ENCODE measurements at regions of chr2 and their contacts with region 1.

Region 1: GRCh38 chr2:223970343-223971128 is 13.3 kb downstream of the MRPL44 start:
- DNase-seq: no peak
- ATAC-seq: peak; percentile 66
- H3K4me3 Mint-ChIP-seq: no peak overlapping the region
- H3K27ac Mint-ChIP-seq: no peak overlapping the region
- H3K4me1 Mint-ChIP-seq: peaks cover 22% of the 10 kb centered on the region
- H3K27me3 Mint-ChIP-seq: no peaks in the 10 kb centered on the region
- CTCF ChIP-seq: peak; percentile 80

Region 2: DNA sequence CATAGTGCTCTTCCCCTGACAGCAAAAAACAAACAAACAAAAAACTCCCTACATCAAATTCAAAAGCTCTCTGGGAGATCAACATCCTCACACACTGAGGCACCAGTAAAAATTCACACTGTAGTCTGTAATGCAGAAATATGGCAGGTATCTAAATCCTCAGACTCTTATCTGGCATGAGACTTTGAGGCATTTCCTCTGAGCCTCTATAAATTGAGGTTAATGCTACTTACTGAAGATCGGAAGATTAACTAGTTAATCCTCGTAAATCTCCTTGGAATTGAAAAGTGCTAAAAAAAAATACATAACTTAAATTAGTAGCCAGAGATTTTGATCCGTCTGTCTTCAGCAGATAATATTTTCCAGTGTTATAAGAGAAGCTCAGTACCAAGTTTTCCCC is 198.2 kb before region 1 on chr2:
- CTCF ChIA-PET with region 1: no interaction called
- POLR2A ChIA-PET with region 1: no interaction called
- DNase-seq: no peak
- ATAC-seq: no peak
- H3K4me3 Mint-ChIP-seq: no peak overlapping the region
- H3K27ac Mint-ChIP-seq: no peak overlapping the region
- H3K4me1 Mint-ChIP-seq: peaks cover 3% of the 10 kb centered on the region; the same call in 1 of the 2 replicates
- H3K27me3 Mint-ChIP-seq: no peaks in the 10 kb centered on the region
- CTCF ChIP-seq: no peak

Region 3: GRCh38 chr2:223993621-223994232 is 23.2 kb after region 1 on chr2:
- CTCF ChIA-PET with region 1: interaction called, 27 read pairs
- POLR2A ChIA-PET with region 1: no interaction called
- DNase-seq: peak; percentile 64
- ATAC-seq: peak; percentile 64
- H3K4me3 Mint-ChIP-seq: no peak overlapping the region
- H3K27ac Mint-ChIP-seq: no peak overlapping the region
- H3K4me1 Mint-ChIP-seq: peaks cover 8% of the 10 kb centered on the region
- H3K27me3 Mint-ChIP-seq: no peaks in the 10 kb centered on the region
- CTCF ChIP-seq: peak; percentile 72

Region 4: GRCh38 chr2:224062481-224063297 is 92.2 kb after region 1 on chr2:
- CTCF ChIA-PET with region 1: interaction called, 20 read pairs
- POLR2A ChIA-PET with region 1: no interaction called
- DNase-seq: no peak
- ATAC-seq: peak; percentile 63
- H3K4me3 Mint-ChIP-seq: no peak overlapping the region
- H3K27ac Mint-ChIP-seq: no peak overlapping the region
- H3K4me1 Mint-ChIP-seq: 0 out of 2 replicates have a peak, but pooled peaks cover 5% of the 10 kb centered on the region
- H3K27me3 Mint-ChIP-seq: no peaks in the 10 kb centered on the region
- CTCF ChIP-seq: no peak

Region 5: DNA sequence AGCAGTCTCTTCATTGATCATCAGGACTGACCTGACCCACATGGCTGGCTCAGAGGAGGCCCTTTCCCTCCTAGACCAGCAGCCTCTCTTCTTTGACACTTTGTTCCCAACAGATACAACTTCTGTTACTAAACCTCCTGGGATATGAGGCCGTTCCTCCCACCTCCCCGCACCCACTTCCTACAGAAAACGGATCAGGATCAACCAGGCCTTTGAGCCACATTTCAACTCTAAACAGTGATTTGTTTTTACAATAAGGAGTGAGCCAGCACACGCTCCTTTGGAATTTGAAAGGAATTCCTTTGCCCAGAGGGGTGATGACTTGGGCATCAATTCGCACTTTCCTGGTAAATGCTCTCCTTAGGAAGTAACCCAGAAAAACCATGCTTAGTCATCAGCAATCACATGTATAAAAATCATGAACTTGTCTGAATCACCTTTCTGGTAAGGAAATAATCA is 250.9 kb after region 1 on chr2:
- CTCF ChIA-PET with region 1: no interaction called
- POLR2A ChIA-PET with region 1: no interaction called
- DNase-seq: no peak
- ATAC-seq: peak; percentile 68
- H3K4me3 Mint-ChIP-seq: no peak overlapping the region
- H3K27ac Mint-ChIP-seq: peak overlapping the region; percentile 53
- H3K4me1 Mint-ChIP-seq: peaks cover 54% of the 10 kb centered on the region
- H3K27me3 Mint-ChIP-seq: no peaks in the 10 kb centered on the region; the same call in 1 of the 2 replicates
- CTCF ChIP-seq: no peak

Region 6: GRCh38 chr2:224357098-224357901 is 386.8 kb after region 1 on chr2:
- CTCF ChIA-PET with region 1: interaction called, 38 read pairs
- POLR2A ChIA-PET with region 1: no interaction called
- DNase-seq: peak; percentile 40
- ATAC-seq: peak; percentile 62
- H3K4me3 Mint-ChIP-seq: no peak overlapping the region
- H3K27ac Mint-ChIP-seq: no peak overlapping the region
- H3K4me1 Mint-ChIP-seq: no peaks in the 10 kb centered on the region
- H3K27me3 Mint-ChIP-seq: no peaks in the 10 kb centered on the region
- CTCF ChIP-seq: peak; percentile 62

Region 7: GRCh38 chr2:224449212-224450147 is 478.9 kb after region 1 on chr2:
- CTCF ChIA-PET with region 1: interaction called, 10 read pairs
- POLR2A ChIA-PET with region 1: no interaction called
- DNase-seq: no peak
- ATAC-seq: peak; percentile 58
- H3K4me3 Mint-ChIP-seq: no peak overlapping the region
- H3K27ac Mint-ChIP-seq: peak overlapping the region; percentile 34; the same call in 1 of the 2 replicates
- H3K4me1 Mint-ChIP-seq: peaks cover 3% of the 10 kb centered on the region; the same call in 1 of the 2 replicates
- H3K27me3 Mint-ChIP-seq: no peaks in the 10 kb centered on the region
- CTCF ChIP-seq: peak; percentile 43; the same call in 1 of the 2 replicates

Measured in WTC11 (cell line).